Activated B cell treated with CpG ODN at 0.5 μM for 24 hours (primary cell): ENCODE measurements at regions of chr22 and their contacts with region 1.

Region 1: GRCh38 chr22:42662114-42663021 is 13.2 kb upstream of the CYB5R3 start:
- DNase-seq: peak; percentile 83
- ATAC-seq: peak; percentile 33
- H3K4me3 Mint-ChIP-seq: peak overlapping the region; percentile 77
- H3K27ac Mint-ChIP-seq: peak overlapping the region; percentile 53
- H3K4me1 Mint-ChIP-seq: peaks cover 46% of the 10 kb centered on the region
- H3K27me3 Mint-ChIP-seq: no peaks in the 10 kb centered on the region
- CTCF ChIP-seq: peak; percentile 75

Region 2: GRCh38 chr22:42581762-42582716 is 80.3 kb before region 1 on chr22:
- CTCF ChIA-PET with region 1: no interaction called
- POLR2A ChIA-PET with region 1: no interaction called
- intact Hi-C with region 1: no loop called
- DNase-seq: peak; percentile 79
- ATAC-seq: peak; percentile 87
- H3K4me3 Mint-ChIP-seq: peak overlapping the region; percentile 95
- H3K27ac Mint-ChIP-seq: peak overlapping the region; percentile 75
- H3K4me1 Mint-ChIP-seq: peaks cover 14% of the 10 kb centered on the region
- H3K27me3 Mint-ChIP-seq: no peaks in the 10 kb centered on the region
- CTCF ChIP-seq: no peak

Region 3: DNA sequence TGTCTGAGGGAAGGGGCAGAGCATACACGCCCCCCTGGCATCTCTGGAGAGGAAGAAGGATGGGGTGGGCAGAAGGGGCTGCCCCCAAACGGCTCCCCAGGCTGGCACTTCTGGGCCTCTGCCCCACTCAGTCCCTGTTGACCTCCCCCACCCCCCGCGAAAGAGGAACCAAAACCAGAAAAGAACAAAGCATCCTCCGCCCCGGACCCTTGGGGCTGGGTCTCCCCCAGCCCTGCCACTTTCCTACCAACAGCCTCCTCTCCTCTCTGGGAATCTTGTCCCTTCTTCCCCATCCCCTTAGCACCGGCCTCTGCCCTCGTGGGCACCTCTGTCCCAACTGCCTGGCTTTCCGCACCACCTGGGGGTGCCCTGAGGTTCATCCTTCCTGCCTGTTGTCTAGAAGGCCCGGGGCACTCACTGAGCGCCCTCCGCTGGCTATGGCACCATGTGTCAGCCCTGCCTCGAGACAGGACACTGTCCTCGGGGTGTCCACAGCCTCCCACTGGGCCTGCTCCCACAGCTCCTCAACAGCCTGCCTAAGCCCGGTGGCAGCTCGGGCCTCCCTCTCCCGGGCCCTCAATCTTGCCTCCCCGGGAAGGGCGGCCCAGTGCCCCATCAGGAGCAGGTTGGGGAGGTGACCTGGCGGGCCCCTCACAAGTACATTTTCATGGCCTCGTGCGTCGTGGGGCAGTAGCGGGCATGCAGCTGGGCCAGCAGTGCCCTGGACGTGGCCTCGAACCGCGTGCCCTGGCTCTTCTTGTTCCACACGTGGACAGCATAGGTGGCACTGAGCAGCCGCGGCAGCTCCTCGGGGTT is 30.1 kb after region 1 on chr22:
- CTCF ChIA-PET with region 1: no interaction called
- POLR2A ChIA-PET with region 1: interaction called, 5 read pairs
- intact Hi-C with region 1: loop called (anchors 1 kb)
- DNase-seq: peak; percentile 45
- ATAC-seq: peak; percentile 87
- H3K4me3 Mint-ChIP-seq: peak overlapping the region; percentile 68
- H3K27ac Mint-ChIP-seq: peak overlapping the region; percentile 88
- H3K4me1 Mint-ChIP-seq: peaks cover 42% of the 10 kb centered on the region
- H3K27me3 Mint-ChIP-seq: no peaks in the 10 kb centered on the region
- CTCF ChIP-seq: no peak

Region 4: DNA sequence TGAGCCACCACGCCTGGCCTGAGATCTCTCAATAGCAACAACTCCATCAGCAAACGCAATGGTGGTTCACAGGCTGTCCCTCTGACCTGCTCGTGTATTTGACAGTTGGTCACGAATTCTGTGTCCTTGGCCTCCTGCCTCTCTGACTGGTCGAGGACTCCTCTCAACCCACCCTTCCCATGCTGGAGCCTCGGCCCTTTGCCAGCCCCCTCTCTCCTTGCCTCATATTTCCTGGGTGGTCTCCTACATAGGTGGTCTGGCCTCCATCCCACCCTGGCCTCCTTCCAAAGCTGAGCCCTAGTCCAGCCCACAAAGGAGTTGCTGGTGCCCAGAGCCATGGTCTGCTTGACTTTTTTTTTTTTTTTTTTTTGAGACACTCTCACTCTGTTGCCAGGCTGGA is 69.7 kb after region 1 on chr22:
- CTCF ChIA-PET with region 1: no interaction called
- POLR2A ChIA-PET with region 1: no interaction called
- intact Hi-C with region 1: no loop called
- DNase-seq: no peak
- ATAC-seq: no peak
- H3K4me3 Mint-ChIP-seq: no peak overlapping the region
- H3K27ac Mint-ChIP-seq: no peak overlapping the region
- H3K4me1 Mint-ChIP-seq: peaks cover 6% of the 10 kb centered on the region
- H3K27me3 Mint-ChIP-seq: peaks cover 2% of the 10 kb centered on the region
- CTCF ChIP-seq: no peak

Region 5: GRCh38 chr22:42754658-42755057 is 92.3 kb after region 1 on chr22:
- CTCF ChIA-PET with region 1: no interaction called
- POLR2A ChIA-PET with region 1: interaction called, 17 read pairs
- intact Hi-C with region 1: loop called (anchors 1 kb)
- DNase-seq: no peak
- ATAC-seq: no peak
- H3K4me3 Mint-ChIP-seq: no peak overlapping the region
- H3K27ac Mint-ChIP-seq: peak overlapping the region; percentile 30
- H3K4me1 Mint-ChIP-seq: peaks cover 29% of the 10 kb centered on the region
- H3K27me3 Mint-ChIP-seq: peaks cover 1% of the 10 kb centered on the region
- CTCF ChIP-seq: no peak

Region 6: DNA sequence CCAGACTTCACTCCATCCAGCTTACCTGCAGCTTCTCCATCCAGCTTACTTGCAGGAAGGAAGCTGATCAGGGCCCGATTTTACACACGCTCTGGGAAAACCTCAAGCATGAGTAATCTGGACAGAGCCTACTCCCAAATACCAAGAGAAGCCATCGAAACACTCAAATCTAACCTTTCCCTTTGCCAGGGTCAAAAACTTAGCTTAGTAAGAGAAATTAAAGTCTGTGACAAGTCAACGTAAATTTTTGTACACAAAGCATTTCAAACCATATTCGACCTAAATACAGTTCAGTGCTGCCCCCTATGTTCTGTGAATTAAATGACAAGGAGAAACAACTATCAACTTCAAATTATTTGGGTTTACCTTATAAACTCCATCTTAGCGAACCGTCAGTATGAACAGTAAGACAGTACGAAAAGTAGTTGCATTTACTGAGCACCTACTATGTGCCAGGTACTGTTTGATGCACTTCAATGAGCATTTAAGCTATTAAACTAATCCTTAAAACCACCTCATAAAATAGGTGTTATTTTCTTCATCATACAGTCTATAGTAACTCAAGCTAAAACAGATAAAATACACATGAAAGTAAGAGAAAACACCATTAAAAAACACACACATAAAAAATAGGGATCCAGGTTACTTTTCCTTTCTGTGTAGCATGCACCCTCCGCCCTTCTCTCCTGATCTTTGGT is 157.8 kb after region 1 on chr22:
- CTCF ChIA-PET with region 1: interaction called, 5 read pairs
- POLR2A ChIA-PET with region 1: interaction called, 3 read pairs
- intact Hi-C with region 1: loop called (anchors 1 kb)
- DNase-seq: no peak
- ATAC-seq: no peak
- H3K4me3 Mint-ChIP-seq: no peak overlapping the region
- H3K27ac Mint-ChIP-seq: no peak overlapping the region
- H3K4me1 Mint-ChIP-seq: peaks cover 3% of the 10 kb centered on the region
- H3K27me3 Mint-ChIP-seq: no peaks in the 10 kb centered on the region
- CTCF ChIP-seq: no peak

Region 7: GRCh38 chr22:42967933-42968332 is 305.6 kb after region 1 on chr22:
- CTCF ChIA-PET with region 1: no interaction called
- POLR2A ChIA-PET with region 1: no interaction called
- intact Hi-C with region 1: loop called (anchors 5 kb)
- DNase-seq: no peak
- ATAC-seq: peak; percentile 40
- H3K4me3 Mint-ChIP-seq: no peak overlapping the region
- H3K27ac Mint-ChIP-seq: peak overlapping the region; percentile 46
- H3K4me1 Mint-ChIP-seq: peaks cover 54% of the 10 kb centered on the region
- H3K27me3 Mint-ChIP-seq: no peaks in the 10 kb centered on the region
- CTCF ChIP-seq: no peak

Region 8: DNA sequence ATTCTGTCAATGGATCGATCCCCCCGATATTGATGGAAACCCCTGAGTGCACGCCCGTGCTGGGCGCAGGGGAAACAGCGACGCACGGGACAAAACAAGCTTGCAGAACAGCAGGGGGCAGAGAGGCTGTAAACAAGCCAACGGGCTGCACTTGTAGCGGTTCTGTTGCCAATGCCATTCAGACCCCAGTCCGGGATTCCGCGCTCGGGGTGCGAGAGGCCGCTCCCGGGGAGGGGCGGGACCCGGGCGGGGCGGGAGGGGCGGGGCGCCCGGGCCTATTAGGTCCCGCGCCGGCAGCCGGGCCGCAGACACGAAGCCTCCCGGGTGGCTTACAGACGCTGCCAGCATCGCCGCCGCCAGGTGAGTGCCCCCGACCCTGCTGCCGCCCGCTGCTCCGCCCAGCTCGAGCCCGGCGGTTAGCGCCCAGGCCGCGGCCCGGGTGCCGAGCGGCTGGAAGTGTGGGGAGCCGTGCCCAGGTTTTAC is 448.1 kb after region 1 on chr22 and contains the start of gene BIK:
- CTCF ChIA-PET with region 1: no interaction called
- POLR2A ChIA-PET with region 1: no interaction called
- intact Hi-C with region 1: loop called (anchors 10 kb)
- DNase-seq: peak; percentile 29
- ATAC-seq: peak; percentile 60
- H3K4me3 Mint-ChIP-seq: peak within 1 kb of the TSS; percentile 72
- H3K27ac Mint-ChIP-seq: no peak within 1 kb of the TSS
- H3K4me1 Mint-ChIP-seq: peaks cover 22% of the 10 kb centered on the region
- H3K27me3 Mint-ChIP-seq: peaks cover 29% of the 10 kb centered on the region
- CTCF ChIP-seq: no peak
- total RNA-seq, gene BIK: 2.6 TPM in 2 replicates